H1 (cell line): ENCODE measurements at regions of chr1 and their contacts with region 1.

Region 1: GRCh38 chr1:11967028-11967547 is 13.2 kb upstream of the MFN2 start:
- DNase-seq: peak; percentile 64 to 76
- H3K4me3 ChIP-seq: no peak overlapping the region
- H3K27ac ChIP-seq: no peak overlapping the region
- H3K4me1 ChIP-seq: no peaks in the 10 kb centered on the region
- H3K27me3 ChIP-seq: no peaks in the 10 kb centered on the region
- CTCF ChIP-seq: peak; percentile 68 to 98 (median 95)
- EP300 ChIP-seq: no peak
- POLR2A ChIP-seq: no peak
- RAD21 ChIP-seq: peak; percentile 95

Region 2: GRCh38 chr1:11893907-11894251 is 73.2 kb before region 1 on chr1:
- CTCF ChIA-PET with region 1: interaction called, 13 read pairs
- POLR2A ChIA-PET with region 1: no interaction called
- DNase-seq: peak in 1 of 2 experiments; percentile 93
- H3K4me3 ChIP-seq: no peak overlapping the region
- H3K27ac ChIP-seq: no peak overlapping the region
- H3K4me1 ChIP-seq: no peaks in the 10 kb centered on the region; a peak in 3 of 7 replicates
- H3K27me3 ChIP-seq: no peaks in the 10 kb centered on the region
- CTCF ChIP-seq: peak; percentile 97 to 98 (median 98)
- EP300 ChIP-seq: no peak
- POLR2A ChIP-seq: no peak
- RAD21 ChIP-seq: peak; percentile 91 to 96

Region 3: DNA sequence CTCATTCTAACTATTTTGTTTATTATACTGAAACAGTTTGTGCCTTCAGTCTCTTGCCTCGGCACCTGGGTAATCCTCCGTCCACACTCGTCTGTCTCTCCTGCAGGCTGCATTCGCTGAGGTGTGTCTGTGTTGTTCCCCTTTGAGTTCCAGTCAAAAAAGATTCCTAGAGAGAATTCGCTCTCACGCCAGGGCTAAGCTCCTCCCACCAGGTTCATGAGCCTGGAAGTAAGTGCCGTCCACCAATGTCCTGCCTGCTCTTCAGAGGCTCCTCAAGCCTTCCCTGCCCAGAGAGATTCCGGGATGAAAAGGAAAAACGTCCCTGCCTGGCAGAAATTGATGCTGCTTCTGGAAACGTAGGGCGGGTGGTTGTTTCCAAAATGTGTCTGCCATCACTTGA is 53.8 kb before region 1 on chr1:
- CTCF ChIA-PET with region 1: interaction called, 32 read pairs
- POLR2A ChIA-PET with region 1: interaction called, 220 read pairs
- DNase-seq: no peak
- H3K4me3 ChIP-seq: no peak overlapping the region
- H3K27ac ChIP-seq: no peak overlapping the region
- H3K4me1 ChIP-seq: peaks cover 0 to 5% (median 2%) of the 10 kb centered on the region in 4 experiments; a peak in 2 of 7 replicates
- H3K27me3 ChIP-seq: no peaks in the 10 kb centered on the region
- CTCF ChIP-seq: no peak
- EP300 ChIP-seq: no peak
- POLR2A ChIP-seq: no peak
- RAD21 ChIP-seq: no peak

Region 4: DNA sequence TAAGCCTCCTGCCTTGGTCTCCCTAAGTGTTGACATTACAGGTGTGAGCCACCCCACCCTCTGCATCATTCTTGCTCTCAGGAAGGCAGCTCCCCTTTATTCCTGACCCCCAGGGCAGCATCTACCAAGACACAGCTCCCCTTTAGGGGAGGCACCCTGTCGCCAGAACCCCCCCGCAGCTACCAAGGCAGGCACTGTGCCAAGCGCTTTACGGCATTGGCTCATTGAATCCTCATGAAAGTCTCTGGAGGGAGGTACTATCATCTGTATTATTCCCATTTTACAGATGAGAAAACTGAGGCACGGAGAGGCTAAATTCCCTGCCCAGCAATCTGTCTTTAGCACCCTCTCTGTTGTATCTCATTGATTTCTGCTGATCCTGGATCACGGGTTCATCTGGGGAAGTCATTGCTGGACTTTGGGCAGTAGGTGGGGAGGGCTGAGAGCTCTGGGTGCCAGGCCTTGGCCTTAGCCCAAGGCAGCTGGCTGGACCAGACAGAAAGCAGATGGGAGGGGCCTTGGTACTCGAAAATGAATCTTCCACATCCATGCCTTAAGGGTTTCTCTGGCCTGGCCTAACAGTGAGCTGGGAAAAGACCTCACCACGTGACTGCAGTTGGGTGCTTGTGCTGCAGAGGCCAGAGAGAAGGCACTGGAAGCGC is 26.7 kb before region 1 on chr1:
- CTCF ChIA-PET with region 1: interaction called, 13 read pairs
- POLR2A ChIA-PET with region 1: interaction called, 6 read pairs
- DNase-seq: no peak
- H3K4me3 ChIP-seq: no peak overlapping the region
- H3K27ac ChIP-seq: no peak overlapping the region
- H3K4me1 ChIP-seq: peaks cover 2 to 19% (median 13%) of the 10 kb centered on the region in 4 experiments
- H3K27me3 ChIP-seq: no peaks in the 10 kb centered on the region
- CTCF ChIP-seq: no peak
- EP300 ChIP-seq: no peak
- POLR2A ChIP-seq: no peak
- RAD21 ChIP-seq: no peak

Region 5: GRCh38 chr1:11955204-11955603 is 11.9 kb before region 1 on chr1:
- CTCF ChIA-PET with region 1: interaction called, 12 read pairs
- POLR2A ChIA-PET with region 1: interaction called, 5 read pairs
- DNase-seq: no peak
- H3K4me3 ChIP-seq: no peak overlapping the region
- H3K27ac ChIP-seq: no peak overlapping the region
- H3K4me1 ChIP-seq: no peaks in the 10 kb centered on the region
- H3K27me3 ChIP-seq: no peaks in the 10 kb centered on the region
- CTCF ChIP-seq: no peak
- EP300 ChIP-seq: no peak
- POLR2A ChIP-seq: no peak
- RAD21 ChIP-seq: no peak